B cell (primary cell): ENCODE measurements at regions of chr10 and their contacts with region 1.

Region 1: DNA sequence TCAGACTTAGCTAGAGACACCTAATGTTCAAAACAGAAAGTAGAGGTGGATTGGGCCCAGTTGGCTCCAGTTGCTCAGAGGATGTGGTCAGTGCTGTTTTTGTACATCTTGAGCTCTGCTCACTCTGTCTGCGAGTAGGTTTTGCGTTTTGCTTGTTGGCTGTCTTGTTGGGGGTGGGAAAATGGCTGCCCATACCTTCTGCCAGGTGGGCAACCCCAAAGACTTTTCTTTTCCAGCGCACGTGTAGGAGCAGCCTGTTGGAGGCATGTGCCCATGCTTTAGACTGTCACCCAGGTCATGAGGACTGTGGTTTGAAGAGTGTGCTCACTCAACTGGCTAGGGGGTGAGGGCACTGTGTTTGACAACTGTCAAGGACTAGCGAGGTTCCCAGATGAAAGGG is 73.9 kb downstream of the KAT6B start:
- DNase-seq: peak; percentile 27
- ATAC-seq: peak; percentile 36
- H3K4me3 ChIP-seq: no peak overlapping the region
- H3K4me3 Mint-ChIP-seq: peak overlapping the region; percentile 21
- H3K27ac ChIP-seq: no peak overlapping the region
- H3K27ac Mint-ChIP-seq: peak overlapping the region; percentile 62
- H3K4me1 ChIP-seq: peaks cover 22 to 25% of the 10 kb centered on the region in 2 donors
- H3K4me1 Mint-ChIP-seq: peaks cover 50% of the 10 kb centered on the region
- H3K27me3 ChIP-seq: no peaks in the 10 kb centered on the region
- H3K27me3 Mint-ChIP-seq: no peaks in the 10 kb centered on the region
- CTCF ChIP-seq: no peak

Region 2: GRCh38 chr10:74949843-74950765 is 49.8 kb after region 1 on chr10:
- CTCF ChIA-PET with region 1: no interaction called
- POLR2A ChIA-PET with region 1: no interaction called
- intact Hi-C with region 1: loop called (anchors 10 kb)
- DNase-seq: no peak
- ATAC-seq: no peak
- H3K4me3 ChIP-seq: no peak overlapping the region
- H3K4me3 Mint-ChIP-seq: no peak overlapping the region
- H3K27ac ChIP-seq: no peak overlapping the region
- H3K27ac Mint-ChIP-seq: no peak overlapping the region
- H3K4me1 ChIP-seq: no peaks in the 10 kb centered on the region
- H3K4me1 Mint-ChIP-seq: peaks cover 23% of the 10 kb centered on the region
- H3K27me3 ChIP-seq: no peaks in the 10 kb centered on the region
- H3K27me3 Mint-ChIP-seq: no peaks in the 10 kb centered on the region
- CTCF ChIP-seq: no peak